Activated naive CD4-positive, alpha-beta T cell treated with anti-CD3 and anti-CD28 coated beads, Interleukin-2, amount 10 ng/mL, durations not matched to agents 7 days and 5 days (primary cell): ENCODE measurements at regions of chr21 and their contacts with region 1.

Region 1: GRCh38 chr21:45140346-45140940 is 66.1 kb downstream of the ADARB1 start:
- DNase-seq: peak; percentile 81
- H3K4me3 Mint-ChIP-seq: no peak overlapping the region
- H3K27ac Mint-ChIP-seq: no peak overlapping the region
- H3K4me1 Mint-ChIP-seq: peaks cover 5% of the 10 kb centered on the region
- H3K27me3 Mint-ChIP-seq: no peaks in the 10 kb centered on the region

Region 2: GRCh38 chr21:44897326-44898010 is 243.0 kb before region 1 on chr21:
- CTCF ChIA-PET with region 1: no interaction called
- DNase-seq: no peak
- H3K4me3 Mint-ChIP-seq: no peak overlapping the region
- H3K27ac Mint-ChIP-seq: no peak overlapping the region
- H3K4me1 Mint-ChIP-seq: peaks cover 20% of the 10 kb centered on the region
- H3K27me3 Mint-ChIP-seq: no peaks in the 10 kb centered on the region

Region 3: GRCh38 chr21:44949779-44950198 is 190.7 kb before region 1 on chr21:
- CTCF ChIA-PET with region 1: interaction called, 231 read pairs
- DNase-seq: peak; percentile 90
- H3K4me3 Mint-ChIP-seq: no peak overlapping the region
- H3K27ac Mint-ChIP-seq: peak overlapping the region; percentile 19
- H3K4me1 Mint-ChIP-seq: peaks cover 11% of the 10 kb centered on the region
- H3K27me3 Mint-ChIP-seq: no peaks in the 10 kb centered on the region

Region 4: DNA sequence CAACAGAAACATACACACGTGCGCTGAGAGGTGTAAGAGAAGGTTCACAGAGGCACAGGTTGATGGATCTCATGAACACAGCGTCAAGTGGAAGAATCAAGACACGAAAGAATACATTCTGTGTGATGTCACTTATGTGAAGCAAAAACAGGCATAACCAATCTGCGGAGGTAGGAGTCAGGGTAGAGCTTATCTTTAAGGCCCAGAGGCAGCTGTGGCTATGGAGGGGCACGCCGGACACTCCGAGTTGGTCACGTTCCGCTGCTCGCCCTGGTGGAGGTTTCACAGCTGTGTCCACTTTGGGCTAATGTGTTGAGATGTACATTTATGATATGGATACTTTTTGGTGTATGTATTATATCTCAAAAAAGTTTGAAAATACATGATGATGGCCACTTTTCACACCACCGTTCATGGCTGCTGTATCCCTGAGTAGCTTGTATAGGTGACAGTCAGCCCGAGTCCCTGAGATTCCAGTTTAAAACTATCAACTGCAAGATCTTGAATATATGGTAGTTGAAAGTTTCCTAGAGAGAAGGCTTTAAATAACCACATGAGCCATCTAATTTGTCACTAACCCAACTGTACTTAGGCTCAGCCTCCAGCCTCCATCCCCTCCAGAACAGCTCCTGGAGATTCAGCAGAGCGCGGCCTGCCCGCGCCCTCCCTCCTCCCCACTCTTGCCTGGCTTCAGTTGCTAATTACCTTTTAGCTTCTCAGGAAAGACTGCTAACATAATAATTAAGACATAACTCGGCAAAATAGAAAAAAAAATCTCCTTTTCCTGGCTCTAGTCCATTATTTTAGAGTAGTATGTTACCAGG is 72.8 kb before region 1 on chr21:
- CTCF ChIA-PET with region 1: interaction called, 11 read pairs
- DNase-seq: no peak
- H3K4me3 Mint-ChIP-seq: no peak overlapping the region
- H3K27ac Mint-ChIP-seq: no peak overlapping the region
- H3K4me1 Mint-ChIP-seq: no peaks in the 10 kb centered on the region
- H3K27me3 Mint-ChIP-seq: peaks cover 16% of the 10 kb centered on the region

Region 5: GRCh38 chr21:45098867-45099266 is 41.6 kb before region 1 on chr21:
- CTCF ChIA-PET with region 1: interaction called, 17 read pairs
- DNase-seq: no peak
- H3K4me3 Mint-ChIP-seq: no peak overlapping the region
- H3K27ac Mint-ChIP-seq: no peak overlapping the region
- H3K4me1 Mint-ChIP-seq: peaks cover 31% of the 10 kb centered on the region
- H3K27me3 Mint-ChIP-seq: no peaks in the 10 kb centered on the region

Region 6: DNA sequence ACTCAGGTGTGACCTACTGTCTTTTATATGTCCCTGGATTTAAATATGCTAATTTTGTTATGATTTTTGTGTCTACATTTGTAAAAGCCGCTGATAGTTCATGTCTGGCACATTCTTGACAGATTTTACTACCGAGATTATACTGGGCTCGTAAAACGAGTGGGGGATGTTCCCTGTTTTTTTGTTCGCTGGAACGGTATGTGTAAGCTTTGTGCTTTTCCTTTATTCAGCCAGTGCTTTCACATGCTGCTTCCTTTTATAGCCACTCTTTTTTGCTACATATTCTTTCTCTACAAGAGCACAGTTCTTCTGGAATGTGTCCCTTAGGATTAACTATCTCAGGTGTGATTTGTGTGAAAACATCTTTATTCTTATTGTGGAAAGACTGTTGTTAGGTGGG is 19.5 kb before region 1 on chr21:
- CTCF ChIA-PET with region 1: interaction called, 96 read pairs
- DNase-seq: no peak
- H3K4me3 Mint-ChIP-seq: no peak overlapping the region
- H3K27ac Mint-ChIP-seq: no peak overlapping the region
- H3K4me1 Mint-ChIP-seq: peaks cover 11% of the 10 kb centered on the region
- H3K27me3 Mint-ChIP-seq: no peaks in the 10 kb centered on the region

Region 7: GRCh38 chr21:45152265-45152746 is 11.9 kb after region 1 on chr21:
- CTCF ChIA-PET with region 1: interaction called, 19 read pairs
- DNase-seq: peak; percentile 80
- H3K4me3 Mint-ChIP-seq: peak overlapping the region; percentile 29
- H3K27ac Mint-ChIP-seq: peak overlapping the region; percentile 46
- H3K4me1 Mint-ChIP-seq: peaks cover 43% of the 10 kb centered on the region
- H3K27me3 Mint-ChIP-seq: no peaks in the 10 kb centered on the region

Region 8: GRCh38 chr21:45309069-45309986 is 168.9 kb after region 1 on chr21:
- CTCF ChIA-PET with region 1: interaction called, 16 read pairs
- DNase-seq: peak; percentile 55
- H3K4me3 Mint-ChIP-seq: no peak overlapping the region
- H3K27ac Mint-ChIP-seq: no peak overlapping the region
- H3K4me1 Mint-ChIP-seq: peaks cover 6% of the 10 kb centered on the region
- H3K27me3 Mint-ChIP-seq: peaks cover 16% of the 10 kb centered on the region